A673 (cell line): ENCODE measurements at regions of chr1 and their contacts with region 1.

Region 1: DNA sequence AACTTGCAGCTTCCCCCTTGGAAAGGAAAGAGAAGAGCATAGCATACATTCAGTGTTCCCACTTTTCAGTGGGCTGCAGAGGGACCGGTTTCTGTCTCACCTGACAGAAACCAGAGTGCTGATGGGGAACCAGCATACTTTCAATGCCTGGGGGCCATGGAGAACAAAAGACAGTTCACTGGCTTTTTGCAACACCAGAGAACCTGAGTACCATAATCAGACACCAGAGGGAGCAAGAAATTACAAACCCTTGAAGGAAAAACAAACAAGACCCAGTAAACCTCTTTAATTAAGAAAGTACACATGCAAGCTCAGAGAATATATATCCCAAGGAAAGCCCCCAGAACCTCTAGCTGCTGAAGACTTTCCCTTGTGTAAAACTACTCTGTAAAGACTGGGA is 51.1 kb downstream of the CSMD2 start:
- DNase-seq: peak; percentile 39
- H3K4me3 ChIP-seq: no peak overlapping the region
- H3K27ac ChIP-seq: no peak overlapping the region
- H3K4me1 ChIP-seq: no peaks in the 10 kb centered on the region
- H3K27me3 ChIP-seq: no peaks in the 10 kb centered on the region
- CTCF ChIP-seq: peak; percentile 46

Region 2: DNA sequence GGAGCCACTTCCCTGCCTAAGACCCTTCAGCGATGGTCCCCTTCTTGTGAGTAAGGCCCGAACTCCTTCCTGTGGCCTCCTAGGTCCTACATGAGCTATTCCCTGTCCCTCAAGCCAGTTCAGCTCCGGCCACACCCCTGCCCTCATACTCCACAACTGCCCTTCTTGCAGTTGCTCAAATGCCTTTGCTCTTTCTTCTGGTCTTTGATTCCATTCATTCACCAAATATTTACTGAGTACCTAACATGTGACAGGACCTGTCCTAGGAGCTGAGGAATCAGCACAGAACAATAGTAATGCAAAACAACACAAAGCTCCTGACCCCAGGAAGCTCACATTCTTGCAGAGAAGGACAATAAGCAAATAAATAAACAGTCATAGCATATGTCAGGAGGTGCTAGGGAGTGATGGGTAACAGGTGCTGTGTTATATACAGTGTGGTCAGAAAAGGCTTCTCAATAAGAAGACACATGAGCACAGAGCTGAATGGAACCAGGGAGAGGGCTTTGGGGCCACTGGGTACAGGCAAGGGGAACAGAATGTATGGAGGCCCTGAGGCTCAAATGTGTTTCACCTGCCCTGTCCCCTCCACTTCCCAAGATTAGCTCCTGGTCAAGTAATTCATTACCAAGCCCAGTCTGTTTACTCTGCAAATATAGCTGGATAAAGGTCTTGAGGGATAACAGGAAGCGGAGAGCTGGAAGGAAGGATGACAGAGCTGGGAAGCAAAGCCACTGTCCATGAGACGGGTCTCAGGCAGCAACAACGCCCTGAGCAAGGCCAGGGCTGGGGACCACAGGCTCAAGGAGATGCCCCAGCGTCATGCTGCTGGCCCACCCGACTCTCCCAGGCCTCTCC is 94.0 kb before region 1 on chr1:
- CTCF ChIA-PET with region 1: no interaction called
- POLR2A ChIA-PET with region 1: no interaction called
- intact Hi-C with region 1: no loop called
- DNase-seq: no peak
- H3K4me3 ChIP-seq: no peak overlapping the region
- H3K27ac ChIP-seq: no peak overlapping the region
- H3K4me1 ChIP-seq: no peaks in the 10 kb centered on the region
- H3K27me3 ChIP-seq: no peaks in the 10 kb centered on the region
- CTCF ChIP-seq: no peak

Region 3: DNA sequence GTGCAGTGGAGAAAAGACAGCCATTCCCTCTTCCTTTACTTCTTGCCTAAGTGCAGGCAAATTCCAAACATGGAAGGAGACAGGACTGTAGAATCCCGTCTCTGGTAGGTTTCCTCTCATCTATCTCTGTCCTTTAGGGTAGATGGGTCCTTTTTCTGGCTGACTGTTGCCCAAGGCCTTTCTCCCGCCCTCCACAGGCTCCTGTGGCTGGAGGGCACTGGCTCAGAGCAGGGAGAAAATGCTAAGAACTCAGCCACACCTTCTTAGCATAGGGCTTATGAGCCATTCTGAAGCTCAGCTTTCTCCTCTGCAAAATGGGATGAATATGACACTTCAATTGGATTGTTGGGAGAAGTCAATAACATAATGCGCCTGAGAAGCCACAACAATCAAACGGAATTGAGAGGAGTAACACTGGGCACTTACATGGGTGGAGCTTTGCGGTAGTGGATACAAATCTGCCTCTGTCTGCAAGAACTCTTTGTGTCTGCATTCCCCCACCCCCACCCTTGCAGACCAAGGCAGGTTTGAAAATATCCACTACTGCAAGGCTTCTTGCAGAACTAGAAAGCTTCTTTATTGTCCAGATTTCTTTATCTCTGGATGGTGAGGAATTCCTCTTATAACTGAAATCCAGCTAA is 43.6 kb before region 1 on chr1:
- CTCF ChIA-PET with region 1: no interaction called
- POLR2A ChIA-PET with region 1: no interaction called
- intact Hi-C with region 1: no loop called
- DNase-seq: no peak
- H3K4me3 ChIP-seq: no peak overlapping the region
- H3K27ac ChIP-seq: no peak overlapping the region
- H3K4me1 ChIP-seq: no peaks in the 10 kb centered on the region
- H3K27me3 ChIP-seq: no peaks in the 10 kb centered on the region
- CTCF ChIP-seq: no peak

Region 4: DNA sequence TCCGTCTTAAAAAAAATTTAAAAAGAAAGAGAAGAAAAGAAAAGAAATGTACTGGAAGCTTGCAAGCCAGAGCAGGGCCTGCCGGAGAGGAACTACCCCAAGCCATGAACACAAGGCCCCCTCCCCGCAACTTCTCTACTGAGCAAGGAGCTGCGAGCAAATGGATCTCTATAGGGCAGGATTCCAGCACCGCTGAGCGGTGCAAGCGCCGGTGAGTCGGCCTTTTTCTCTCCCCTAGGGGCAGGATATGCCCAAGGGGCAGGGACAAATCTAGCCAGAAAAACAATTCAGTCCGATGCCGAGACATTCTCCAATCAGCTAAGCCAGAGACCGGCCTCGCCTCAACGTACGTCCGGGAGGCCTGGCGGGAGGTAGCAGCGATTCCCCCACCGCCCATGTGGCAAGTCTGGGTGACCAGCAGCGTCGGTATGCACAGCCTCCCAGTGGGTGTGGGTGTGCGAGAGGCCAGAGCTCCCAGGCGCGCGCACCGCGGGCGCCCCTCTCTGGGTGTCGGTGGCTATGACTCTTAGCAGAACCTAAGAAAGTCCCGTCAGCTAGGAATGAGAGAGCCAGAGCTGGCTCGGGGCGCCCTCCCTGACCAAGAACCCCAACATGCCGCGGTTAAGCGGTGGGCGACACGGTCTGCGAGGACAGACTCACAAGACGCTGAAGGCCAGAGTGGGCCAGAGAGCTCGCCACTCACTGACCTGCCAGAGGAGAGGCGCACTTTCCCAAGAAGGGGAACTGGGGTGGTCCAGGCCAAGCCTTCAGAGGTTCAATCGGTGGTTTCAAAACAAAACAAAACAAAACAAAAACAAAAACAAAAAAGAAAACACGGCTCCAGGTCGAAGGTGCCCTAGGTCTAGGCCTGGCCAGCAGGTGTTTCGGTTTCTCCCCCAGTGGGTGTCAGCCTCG is 49.2 kb after region 1 on chr1:
- CTCF ChIA-PET with region 1: no interaction called
- POLR2A ChIA-PET with region 1: no interaction called
- intact Hi-C with region 1: loop called (anchors 2 kb)
- DNase-seq: peak; percentile 85
- H3K4me3 ChIP-seq: peak overlapping the region; percentile 49
- H3K27ac ChIP-seq: no peak overlapping the region
- H3K4me1 ChIP-seq: peaks cover 10% of the 10 kb centered on the region
- H3K27me3 ChIP-seq: peaks cover 63% of the 10 kb centered on the region
- CTCF ChIP-seq: peak; percentile 78

Region 5: GRCh38 chr1:34478515-34479077 is 364.7 kb after region 1 on chr1:
- CTCF ChIA-PET with region 1: no interaction called
- POLR2A ChIA-PET with region 1: no interaction called
- intact Hi-C with region 1: no loop called
- DNase-seq: no peak
- H3K4me3 ChIP-seq: no peak overlapping the region
- H3K27ac ChIP-seq: no peak overlapping the region
- H3K4me1 ChIP-seq: no peaks in the 10 kb centered on the region
- H3K27me3 ChIP-seq: no peaks in the 10 kb centered on the region
- CTCF ChIP-seq: no peak

Region 6: GRCh38 chr1:35030756-35031446 is 917.0 kb after region 1 on chr1:
- CTCF ChIA-PET with region 1: no interaction called
- POLR2A ChIA-PET with region 1: no interaction called
- intact Hi-C with region 1: no loop called
- DNase-seq: peak; percentile 27
- H3K4me3 ChIP-seq: peak overlapping the region; percentile 69
- H3K27ac ChIP-seq: peak overlapping the region; percentile 94
- H3K4me1 ChIP-seq: peaks cover 6% of the 10 kb centered on the region
- H3K27me3 ChIP-seq: no peaks in the 10 kb centered on the region
- CTCF ChIP-seq: no peak